ENCODE measurements at regions of chr11 and their contacts with region 1.

Region 1: GRCh38 chr11:1763796-1764661 is at the start of gene CTSD:
- DNase-seq: peak; percentile 88
- H3K4me3 Mint-ChIP-seq: peak within 1 kb of the TSS; percentile 89
- H3K27ac Mint-ChIP-seq: peak within 1 kb of the TSS; percentile 92
- H3K4me1 Mint-ChIP-seq: peaks cover 18% of the 10 kb centered on the region
- H3K27me3 Mint-ChIP-seq: no peaks in the 10 kb centered on the region
- total RNA-seq, gene CTSD: 84.2 and 92.1 TPM in 2 replicates

Region 2: DNA sequence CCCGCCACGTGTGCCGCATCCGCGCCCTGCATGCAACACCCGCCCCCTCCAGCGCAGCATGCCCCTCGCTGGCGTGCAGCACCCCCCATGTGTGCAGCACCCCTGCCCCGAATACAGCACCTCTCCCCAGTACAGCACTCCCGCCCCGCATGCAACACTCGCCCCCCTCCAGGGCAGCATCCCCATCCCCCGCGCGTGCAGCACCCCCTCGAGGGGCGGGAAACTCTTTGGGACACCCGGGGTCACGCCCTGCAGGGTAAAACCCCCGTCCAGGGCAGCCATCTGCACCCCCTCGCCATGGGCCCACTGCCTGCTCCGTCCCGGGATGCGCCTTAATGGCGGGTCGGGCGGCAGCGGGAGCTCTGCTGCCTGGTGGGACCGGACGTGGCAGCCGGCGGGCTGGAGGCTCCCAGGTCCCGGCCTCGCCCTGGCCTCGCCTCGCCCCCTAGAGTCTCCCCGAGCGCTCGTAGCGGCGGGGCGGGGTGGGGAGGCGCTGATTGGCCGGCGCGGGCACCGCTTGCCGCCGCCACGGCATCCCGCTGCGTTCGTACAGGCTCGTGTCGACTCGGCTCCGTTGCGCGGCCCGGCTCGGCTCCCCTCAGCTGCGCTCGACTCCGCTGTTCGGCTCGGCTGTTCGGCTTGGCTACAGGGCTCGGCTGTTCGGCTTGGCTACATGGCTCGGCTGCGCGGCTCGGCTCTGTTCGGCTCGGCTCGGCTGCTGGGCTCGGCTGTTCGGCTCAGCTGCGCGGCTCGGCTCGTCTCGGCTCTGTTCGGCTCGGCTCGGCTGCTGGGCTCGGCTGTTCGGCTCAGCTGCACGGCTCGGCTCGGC is 374.7 kb before region 1 on chr11:
- intact Hi-C with region 1: loop called (anchors 5 kb)
- DNase-seq: peak; percentile 93
- H3K4me3 Mint-ChIP-seq: peak overlapping the region; percentile 30
- H3K27ac Mint-ChIP-seq: no peak overlapping the region
- H3K4me1 Mint-ChIP-seq: peaks cover 5% of the 10 kb centered on the region
- H3K27me3 Mint-ChIP-seq: peaks cover 33% of the 10 kb centered on the region